ENCODE measurements at regions of chr4 and their contacts with region 1.

Region 1: DNA sequence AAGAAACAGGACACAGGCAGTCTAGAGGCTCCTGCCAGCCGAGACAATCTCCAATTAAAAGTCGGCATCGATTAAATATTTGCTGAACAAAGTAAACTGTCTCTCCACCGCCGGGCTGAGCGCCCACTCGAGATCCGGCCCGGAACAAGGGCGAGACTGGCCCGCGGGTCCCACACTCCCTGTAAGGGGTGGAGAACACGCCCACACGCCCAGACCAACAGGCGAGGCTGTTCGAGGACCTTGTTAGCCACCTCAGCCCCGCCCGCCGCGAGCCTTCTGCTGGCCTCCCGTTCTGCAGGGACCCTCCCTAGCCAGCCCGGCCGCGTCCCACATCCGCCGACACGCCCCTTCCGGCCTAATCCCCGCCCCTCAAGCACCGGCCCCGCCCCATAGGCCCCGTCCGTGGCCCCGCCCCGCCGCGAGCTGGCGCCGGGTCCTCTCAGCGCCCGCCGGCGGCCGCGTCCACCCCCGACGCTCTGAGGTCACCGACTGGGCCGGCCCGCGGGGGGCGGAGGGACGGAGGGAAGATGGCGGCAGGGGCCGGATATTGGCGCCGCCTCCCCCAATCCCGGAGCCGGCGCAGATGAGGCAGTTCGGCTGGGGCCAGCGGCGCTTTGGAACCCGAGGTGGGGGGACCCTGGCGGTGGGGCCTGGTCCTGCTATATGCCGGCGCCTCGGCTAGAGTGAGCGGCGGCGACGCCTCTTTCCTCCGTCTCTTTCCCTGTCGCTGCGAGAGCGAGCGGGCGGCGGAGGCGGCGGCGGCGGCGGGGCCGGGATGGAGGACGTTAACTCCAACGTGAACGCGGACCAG is at the start of gene SLAIN2:
- DNase-seq: peak; percentile 77
- ATAC-seq: peak; percentile 89
- H3K4me3 ChIP-seq: peak within 1 kb of the TSS; percentile 94
- H3K27ac ChIP-seq: peak within 1 kb of the TSS; percentile 88
- H3K4me1 ChIP-seq: no peaks in the 10 kb centered on the region
- H3K27me3 ChIP-seq: no peaks in the 10 kb centered on the region
- CTCF ChIP-seq: peak in 2 of 3 experiments; percentile 16 to 33; a peak in 1 of 6 replicates
- EP300 ChIP-seq: no peak
- POLR2A ChIP-seq: peak; percentile 96
- RAD21 ChIP-seq: no peak
- polyA plus RNA-seq, gene SLAIN2: 4.3 to 6.0 TPM

Region 2: DNA sequence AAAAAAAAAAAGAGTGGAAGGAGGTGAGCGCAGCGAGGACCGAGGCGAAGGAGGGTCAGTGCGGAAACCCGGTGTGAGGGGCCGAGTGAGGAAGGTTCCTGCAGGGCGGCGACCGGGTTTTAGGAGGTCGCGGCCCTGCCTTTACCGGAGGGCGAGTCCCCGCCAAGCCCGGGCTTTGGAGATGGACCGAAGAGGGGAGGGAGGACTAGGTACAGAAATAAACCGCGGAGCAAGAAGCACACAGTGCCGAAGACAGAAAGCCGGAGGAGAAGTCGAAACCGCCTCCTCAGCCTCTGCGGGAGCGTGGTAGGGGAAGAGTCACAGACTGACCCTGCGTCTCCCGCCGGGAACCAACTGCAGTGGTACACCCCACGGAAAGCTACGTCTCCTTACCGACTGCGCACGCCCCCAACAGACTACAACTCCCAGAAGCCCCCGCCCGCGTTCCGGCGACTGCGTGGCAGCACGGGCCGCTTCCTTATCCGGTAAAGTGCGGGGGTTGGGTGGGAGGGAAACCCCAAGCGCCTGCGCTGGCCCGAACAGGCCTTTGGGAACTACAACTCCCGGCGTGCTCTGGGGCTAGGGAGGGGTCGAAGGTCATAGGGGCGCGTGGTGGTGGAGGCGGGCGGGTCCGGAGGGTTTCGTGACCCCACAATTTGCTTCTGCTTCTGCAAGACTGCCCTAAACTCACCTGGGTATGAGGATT is 426.8 kb before region 1 on chr4 and contains the start of gene NFXL1:
- CTCF ChIA-PET with region 1: no interaction called
- POLR2A ChIA-PET with region 1: interaction called, 5 read pairs
- RAD21 ChIA-PET with region 1: no interaction called
- SMC1A ChIA-PET with region 1: no interaction called
- in situ Hi-C with region 1: no loop called
- intact Hi-C with region 1: loop called (anchors 5 kb)
- DNase-seq: peak; percentile 79
- ATAC-seq: peak; percentile 97
- H3K4me3 ChIP-seq: peak within 1 kb of the TSS; percentile 78
- H3K27ac ChIP-seq: peak within 1 kb of the TSS; percentile 61
- H3K4me1 ChIP-seq: no peaks in the 10 kb centered on the region; the same call in 1 of the 2 replicates
- H3K27me3 ChIP-seq: no peaks in the 10 kb centered on the region
- CTCF ChIP-seq: no peak
- EP300 ChIP-seq: no peak
- POLR2A ChIP-seq: peak; percentile 91
- RAD21 ChIP-seq: no peak
- polyA plus RNA-seq, gene NFXL1: 8.8 to 10.0 TPM

Region 3: DNA sequence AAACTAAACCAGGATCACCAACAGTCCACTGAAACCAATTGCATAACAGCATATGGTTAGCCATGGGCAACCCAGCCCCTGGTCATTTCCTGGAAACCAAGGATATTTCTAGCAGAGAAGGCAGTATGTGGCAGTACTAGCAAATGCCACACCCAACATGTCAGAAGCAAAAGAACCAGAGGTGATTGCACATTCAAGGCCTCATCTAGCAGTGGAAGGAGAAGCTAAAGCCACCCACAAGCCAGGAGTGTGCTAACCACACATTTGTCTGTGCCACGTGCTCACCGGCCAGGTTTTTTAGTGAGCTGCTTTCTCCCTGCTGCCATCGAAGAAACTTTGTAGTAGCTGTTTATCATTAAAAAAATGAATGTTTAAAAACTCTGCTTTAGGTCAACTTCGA is 113.5 kb before region 1 on chr4:
- CTCF ChIA-PET with region 1: no interaction called
- POLR2A ChIA-PET with region 1: no interaction called
- RAD21 ChIA-PET with region 1: no interaction called
- SMC1A ChIA-PET with region 1: no interaction called
- in situ Hi-C with region 1: no loop called
- intact Hi-C with region 1: no loop called
- DNase-seq: no peak
- ATAC-seq: peak; percentile 73
- H3K4me3 ChIP-seq: no peak overlapping the region
- H3K27ac ChIP-seq: no peak overlapping the region
- H3K4me1 ChIP-seq: peaks cover 3% of the 10 kb centered on the region; the same call in 1 of the 2 replicates
- H3K27me3 ChIP-seq: no peaks in the 10 kb centered on the region
- CTCF ChIP-seq: no peak
- EP300 ChIP-seq: no peak
- POLR2A ChIP-seq: no peak
- RAD21 ChIP-seq: no peak

Region 4: GRCh38 chr4:48370260-48371134 is 29.3 kb after region 1 on chr4:
- CTCF ChIA-PET with region 1: interaction called, 7 read pairs
- POLR2A ChIA-PET with region 1: interaction called, 3 read pairs
- RAD21 ChIA-PET with region 1: interaction called, 7 read pairs
- SMC1A ChIA-PET with region 1: interaction called, 26 read pairs
- in situ Hi-C with region 1: no loop called
- intact Hi-C with region 1: no loop called
- DNase-seq: peak; percentile 13
- ATAC-seq: peak; percentile 68
- H3K4me3 ChIP-seq: no peak overlapping the region
- H3K27ac ChIP-seq: 0 out of 2 replicates have a peak overlapping the region, but pooled peaks have one; percentile 9
- H3K4me1 ChIP-seq: no peaks in the 10 kb centered on the region
- H3K27me3 ChIP-seq: no peaks in the 10 kb centered on the region
- CTCF ChIP-seq: no peak
- EP300 ChIP-seq: no peak
- POLR2A ChIP-seq: no peak
- RAD21 ChIP-seq: no peak

Measured in GM12878 (cell line).